ENCODE measurements at regions of chr9 and their contacts with region 1.

Region 1: GRCh38 chr9:4984621-4985385 is at the start of gene JAK2:
- DNase-seq: peak; percentile 84 to 91 (median 89)
- H3K4me3 ChIP-seq: peak within 1 kb of the TSS; percentile 88 to 96 (median 93)
- H3K4me3 Mint-ChIP-seq: no peak within 1 kb of the TSS
- H3K27ac ChIP-seq: peak within 1 kb of the TSS; percentile 96 to 99
- H3K27ac Mint-ChIP-seq: peak within 1 kb of the TSS; percentile 89 to 99 (median 97)
- H3K4me1 ChIP-seq: peaks cover 70 to 85% of the 10 kb centered on the region in 2 donors
- H3K4me1 Mint-ChIP-seq: peaks cover 51% of the 10 kb centered on the region
- H3K27me3 ChIP-seq: no peaks in the 10 kb centered on the region
- H3K27me3 Mint-ChIP-seq: no peaks in the 10 kb centered on the region
- CTCF ChIP-seq: peak; percentile 30
- polyA plus RNA-seq, gene JAK2: 23.5 to 34.7 (median 33.0) TPM

Region 2: GRCh38 chr9:4679268-4680172 is 305.3 kb before region 1 on chr9 and contains the start of gene CDC37L1:
- intact Hi-C with region 1: loop called in 1 of 2 experiments (anchors 10 kb)
- DNase-seq: peak; percentile 93 to 96 (median 96)
- H3K4me3 ChIP-seq: peak within 1 kb of the TSS; percentile 66 to 80 (median 79)
- H3K4me3 Mint-ChIP-seq: no peak within 1 kb of the TSS
- H3K27ac ChIP-seq: peak within 1 kb of the TSS; percentile 90 to 95
- H3K27ac Mint-ChIP-seq: no peak within 1 kb of the TSS
- H3K4me1 ChIP-seq: peaks cover 21 to 28% of the 10 kb centered on the region in 2 donors
- H3K4me1 Mint-ChIP-seq: peaks cover 3% of the 10 kb centered on the region
- H3K27me3 ChIP-seq: no peaks in the 10 kb centered on the region
- H3K27me3 Mint-ChIP-seq: peaks cover 0 to 9% (median 1%) of the 10 kb centered on the region in 3 donors
- CTCF ChIP-seq: peak; percentile 81
- polyA plus RNA-seq, gene CDC37L1: 2.8 to 4.4 (median 2.8) TPM

Region 3: DNA sequence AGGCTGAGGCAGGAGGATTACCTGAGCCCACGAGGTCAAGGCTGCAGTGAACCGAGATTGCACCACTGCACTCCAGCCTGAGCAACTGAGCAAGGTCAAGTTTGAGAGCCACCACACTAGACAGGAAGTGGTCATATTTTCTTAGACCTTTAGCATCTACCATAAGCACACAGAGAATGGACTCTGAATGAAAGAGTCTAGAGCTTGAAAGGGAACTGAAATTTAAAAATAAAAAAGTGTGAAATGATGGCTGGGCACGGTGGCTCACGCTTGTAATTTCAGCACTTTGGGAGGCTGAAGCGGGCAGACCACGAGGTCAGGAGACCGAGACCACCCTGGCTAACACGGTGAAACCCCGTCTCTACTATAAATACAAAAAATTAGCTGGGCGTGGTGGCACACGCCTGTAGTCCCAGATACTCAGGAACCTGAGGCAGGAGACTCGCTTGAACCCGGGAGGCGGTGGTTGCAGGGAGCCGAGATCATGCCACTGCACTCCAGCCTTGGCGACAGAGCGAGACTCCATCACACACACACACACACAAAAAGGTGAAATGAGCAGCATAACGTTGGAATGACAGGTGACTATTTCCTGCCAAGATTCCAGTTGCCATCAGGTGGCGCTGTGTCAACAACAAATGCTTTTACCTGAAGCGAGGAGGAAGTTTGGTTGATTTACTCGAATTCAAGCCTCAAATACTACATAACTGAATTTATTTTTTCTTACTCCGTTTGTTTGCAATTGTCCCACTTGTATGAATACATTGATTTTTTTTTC is 222.5 kb before region 1 on chr9:
- intact Hi-C with region 1: loop called (anchors 2 to 5 kb)
- DNase-seq: peak; percentile 27 to 61 (median 61)
- H3K4me3 ChIP-seq: peak overlapping the region; percentile 25 to 74 (median 41)
- H3K4me3 Mint-ChIP-seq: peak overlapping the region; percentile 73 to 88
- H3K27ac ChIP-seq: peak overlapping the region; percentile 52 to 64
- H3K27ac Mint-ChIP-seq: peak overlapping the region; percentile 87 to 97 (median 96)
- H3K4me1 ChIP-seq: peaks cover 50 to 51% of the 10 kb centered on the region in 2 donors
- H3K4me1 Mint-ChIP-seq: peaks cover 51% of the 10 kb centered on the region
- H3K27me3 ChIP-seq: peaks cover 0 to 6% of the 10 kb centered on the region in 2 donors
- H3K27me3 Mint-ChIP-seq: peaks cover 15 to 28% (median 16%) of the 10 kb centered on the region in 3 donors
- CTCF ChIP-seq: peak; percentile 80

Region 4: GRCh38 chr9:4792572-4793458 is 192.0 kb before region 1 on chr9 and contains the start of gene RCL1:
- intact Hi-C with region 1: loop called (anchors 2 to 10 kb)
- DNase-seq: peak; percentile 94 to 97 (median 95)
- H3K4me3 ChIP-seq: peak within 1 kb of the TSS; percentile 74 to 82 (median 80)
- H3K4me3 Mint-ChIP-seq: peak within 1 kb of the TSS; percentile 92 to 95
- H3K27ac ChIP-seq: peak within 1 kb of the TSS; percentile 42 to 69
- H3K27ac Mint-ChIP-seq: peak within 1 kb of the TSS; percentile 67 to 90 (median 88)
- H3K4me1 ChIP-seq: peaks cover 20 to 26% of the 10 kb centered on the region in 2 donors
- H3K4me1 Mint-ChIP-seq: peaks cover 23% of the 10 kb centered on the region
- H3K27me3 ChIP-seq: peaks cover 8 to 15% of the 10 kb centered on the region in 2 donors
- H3K27me3 Mint-ChIP-seq: peaks cover 15 to 22% (median 20%) of the 10 kb centered on the region in 3 donors
- CTCF ChIP-seq: no peak
- polyA plus RNA-seq, gene RCL1: 2.2 to 3.0 (median 3.0) TPM

Region 5: DNA sequence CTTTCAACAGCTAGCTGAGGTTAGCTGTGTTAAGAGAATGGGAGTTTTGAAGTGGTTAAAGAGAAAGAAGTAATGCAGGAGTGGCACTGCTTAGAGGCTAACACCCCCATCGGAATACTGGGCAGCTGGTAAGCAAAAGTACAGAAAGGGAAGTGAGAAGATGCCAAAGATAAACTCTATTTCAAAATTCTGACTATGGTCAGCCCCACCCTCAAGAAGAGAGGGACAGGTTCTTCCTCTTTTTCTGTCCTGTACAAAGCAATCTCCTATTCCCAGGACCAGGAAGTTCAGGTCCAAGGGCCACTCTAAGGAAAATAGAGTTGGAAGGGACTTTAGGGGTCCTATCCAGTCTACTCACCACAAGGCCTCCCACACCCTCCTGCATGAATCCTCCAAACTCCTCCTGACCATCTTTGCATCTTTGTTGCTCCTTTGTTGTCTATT is 45.7 kb before region 1 on chr9:
- intact Hi-C with region 1: loop called (anchors 2 kb)
- DNase-seq: peak; percentile 66 to 88 (median 87)
- H3K4me3 ChIP-seq: peak overlapping the region in 2 of 3 experiments; percentile 31 to 66
- H3K4me3 Mint-ChIP-seq: peak overlapping the region; percentile 43 to 81
- H3K27ac ChIP-seq: peak overlapping the region in 1 of 2 donors; percentile 82
- H3K27ac Mint-ChIP-seq: peak overlapping the region; percentile 91 to 96 (median 93)
- H3K4me1 ChIP-seq: peaks cover 81 to 94% of the 10 kb centered on the region in 2 donors
- H3K4me1 Mint-ChIP-seq: peaks cover 79% of the 10 kb centered on the region
- H3K27me3 ChIP-seq: no peaks in the 10 kb centered on the region
- H3K27me3 Mint-ChIP-seq: peaks cover 0 to 3% (median 0%) of the 10 kb centered on the region in 3 donors
- CTCF ChIP-seq: no peak

Region 6: GRCh38 chr9:5450359-5451091 is 465.7 kb after region 1 on chr9 and contains the start of gene CD274:
- intact Hi-C with region 1: loop called in 1 of 2 experiments (anchors 10 kb)
- DNase-seq: peak; percentile 65 to 91 (median 66)
- H3K4me3 ChIP-seq: peak within 1 kb of the TSS; percentile 76 to 94 (median 82)
- H3K4me3 Mint-ChIP-seq: peak within 1 kb of the TSS; percentile 81 to 93
- H3K27ac ChIP-seq: peak within 1 kb of the TSS; percentile 59 to 85
- H3K27ac Mint-ChIP-seq: peak within 1 kb of the TSS; percentile 87 to 93 (median 89)
- H3K4me1 ChIP-seq: peaks cover 39 to 47% of the 10 kb centered on the region in 2 donors
- H3K4me1 Mint-ChIP-seq: peaks cover 39% of the 10 kb centered on the region
- H3K27me3 ChIP-seq: no peaks in the 10 kb centered on the region
- H3K27me3 Mint-ChIP-seq: peaks cover 0 to 3% (median 0%) of the 10 kb centered on the region in 3 donors
- CTCF ChIP-seq: peak; percentile 62
- polyA plus RNA-seq, gene CD274: 0.24 to 0.84 TPM in 2 of 3 donors, not detected in the other

Region 7: DNA sequence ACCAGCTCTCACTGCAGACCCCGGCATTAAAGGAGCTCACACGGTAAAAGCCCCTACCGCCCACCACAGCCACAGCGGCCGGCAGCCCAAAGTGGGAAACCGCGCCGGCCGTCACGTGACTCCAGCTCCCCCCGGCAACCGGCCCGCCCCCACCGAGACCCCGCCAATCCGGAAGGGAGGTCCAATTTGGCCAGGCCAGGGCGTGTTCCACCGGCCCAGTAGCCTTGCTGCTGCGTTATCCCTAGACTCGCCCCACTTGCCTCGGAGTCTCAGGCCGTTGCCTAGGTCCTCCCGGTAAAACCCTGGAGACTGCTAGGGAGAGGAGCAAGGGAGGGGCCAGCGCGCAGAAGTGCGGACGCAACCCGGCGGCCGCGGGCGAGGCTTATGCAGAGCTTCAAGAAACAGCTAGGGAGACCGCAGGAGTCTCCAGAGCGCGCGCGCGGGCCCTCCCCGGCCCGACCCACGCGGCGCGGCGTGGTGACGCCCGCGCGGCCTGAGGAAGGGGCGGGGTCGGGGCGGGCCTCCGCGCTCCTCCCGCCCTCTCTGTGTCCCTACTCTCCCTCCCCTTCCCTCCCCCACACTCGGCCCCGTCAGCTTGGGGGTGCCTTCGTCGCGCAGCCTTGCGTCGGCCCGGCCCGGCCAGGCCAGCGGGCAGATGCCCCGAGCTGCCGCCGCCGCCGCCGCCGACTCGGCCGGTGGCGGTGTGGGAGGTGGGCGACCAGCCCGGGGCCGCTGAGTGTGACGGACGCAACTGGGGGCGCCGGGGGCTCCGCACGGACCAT is 643.9 kb after region 1 on chr9 and contains the start of gene RIC1:
- intact Hi-C with region 1: loop called in 1 of 2 experiments (anchors 10 kb)
- DNase-seq: peak; percentile 89 to 93 (median 91)
- H3K4me3 ChIP-seq: peak within 1 kb of the TSS; percentile 70 to 100 (median 92)
- H3K4me3 Mint-ChIP-seq: peak within 1 kb of the TSS; percentile 96 to 100
- H3K27ac ChIP-seq: peak within 1 kb of the TSS; percentile 88 to 97
- H3K27ac Mint-ChIP-seq: peak within 1 kb of the TSS; percentile 96 to 99 (median 98)
- H3K4me1 ChIP-seq: peaks cover 51 to 76% of the 10 kb centered on the region in 2 donors
- H3K4me1 Mint-ChIP-seq: peaks cover 73% of the 10 kb centered on the region
- H3K27me3 ChIP-seq: no peaks in the 10 kb centered on the region
- H3K27me3 Mint-ChIP-seq: no peaks in the 10 kb centered on the region
- CTCF ChIP-seq: no peak
- polyA plus RNA-seq, gene RIC1: 13.4 to 36.4 (median 16.3) TPM

Measured in CD14-positive monocyte (primary cell).